ENCODE measurements at regions of chr11 and their contacts with region 1.

Region 1: DNA sequence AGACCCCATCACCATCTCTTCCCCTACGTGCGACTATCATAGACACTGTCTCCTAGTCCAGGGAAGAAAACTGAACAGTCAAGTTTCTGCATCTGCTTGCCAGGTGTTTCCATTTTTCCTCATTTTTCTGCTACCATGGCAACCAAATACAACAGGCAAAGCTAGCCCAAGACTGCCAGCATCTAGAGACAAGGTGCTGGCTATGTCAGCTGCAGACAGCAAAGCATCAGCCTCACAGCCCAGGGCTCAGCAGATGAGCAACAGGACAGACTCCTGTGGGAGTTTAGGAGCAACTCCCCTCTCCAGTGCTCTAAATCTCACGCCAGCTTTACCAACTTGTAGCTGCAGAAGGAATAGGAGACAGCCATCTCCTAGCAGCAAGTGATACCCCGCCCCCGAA is 124.3 kb downstream of the C11orf58 start:
- DNase-seq: peak in 1 of 2 experiments; percentile 30
- H3K4me3 ChIP-seq: no peak overlapping the region
- H3K4me3 Mint-ChIP-seq: no peak overlapping the region
- H3K27ac Mint-ChIP-seq: peak overlapping the region; percentile 67
- H3K4me1 ChIP-seq: peaks cover 55% of the 10 kb centered on the region
- H3K4me1 Mint-ChIP-seq: peaks cover 53% of the 10 kb centered on the region
- H3K27me3 ChIP-seq: no peaks in the 10 kb centered on the region
- H3K27me3 Mint-ChIP-seq: no peaks in the 10 kb centered on the region
- CTCF ChIP-seq: no peak

Region 2: GRCh38 chr11:16841984-16842383 is 20.8 kb before region 1 on chr11:
- CTCF ChIA-PET with region 1: no interaction called
- POLR2A ChIA-PET with region 1: no interaction called
- intact Hi-C with region 1: no loop called
- DNase-seq: no peak
- H3K4me3 ChIP-seq: no peak overlapping the region
- H3K4me3 Mint-ChIP-seq: no peak overlapping the region
- H3K27ac Mint-ChIP-seq: no peak overlapping the region
- H3K4me1 ChIP-seq: no peaks in the 10 kb centered on the region
- H3K4me1 Mint-ChIP-seq: no peaks in the 10 kb centered on the region
- H3K27me3 ChIP-seq: no peaks in the 10 kb centered on the region
- H3K27me3 Mint-ChIP-seq: no peaks in the 10 kb centered on the region
- CTCF ChIP-seq: no peak

Region 3: DNA sequence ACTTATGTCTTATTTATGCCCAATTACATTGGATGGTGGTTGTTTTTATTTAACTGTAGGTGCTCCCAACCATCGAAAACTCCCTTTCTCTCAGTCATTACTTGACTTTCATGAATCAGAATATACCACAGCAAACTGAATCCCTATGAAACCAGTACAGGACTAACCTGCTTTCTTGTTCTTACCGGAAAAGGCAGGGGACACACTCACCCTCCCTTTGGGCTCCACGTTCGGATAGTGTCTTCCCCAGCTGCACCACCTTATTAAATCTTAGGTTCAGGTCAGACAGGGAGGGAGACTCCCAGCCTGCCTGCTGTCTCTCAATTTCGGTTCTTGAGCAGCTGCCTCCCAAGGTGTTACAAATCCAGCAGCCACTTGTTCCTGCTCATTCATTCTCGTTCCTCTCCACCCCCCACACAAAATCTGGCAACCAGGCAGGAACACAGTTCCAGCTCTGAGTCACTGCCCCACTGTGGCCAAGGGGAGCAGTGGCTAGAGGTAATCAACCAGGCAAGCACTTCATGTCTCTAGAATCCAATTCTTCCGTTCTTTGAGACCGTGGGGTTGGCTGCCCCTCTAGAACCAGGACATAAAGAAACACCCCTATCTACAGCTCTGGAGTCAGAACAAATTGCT is 18.4 kb after region 1 on chr11:
- CTCF ChIA-PET with region 1: no interaction called
- POLR2A ChIA-PET with region 1: no interaction called
- intact Hi-C with region 1: loop called (anchors 2 kb)
- DNase-seq: peak in 1 of 2 experiments; percentile 44
- H3K4me3 ChIP-seq: no peak overlapping the region
- H3K4me3 Mint-ChIP-seq: no peak overlapping the region
- H3K27ac Mint-ChIP-seq: peak overlapping the region; percentile 31
- H3K4me1 ChIP-seq: peaks cover 17% of the 10 kb centered on the region
- H3K4me1 Mint-ChIP-seq: peaks cover 32% of the 10 kb centered on the region
- H3K27me3 ChIP-seq: no peaks in the 10 kb centered on the region
- H3K27me3 Mint-ChIP-seq: no peaks in the 10 kb centered on the region
- CTCF ChIP-seq: peak; percentile 21 to 47